CD8-positive, alpha-beta T cell (primary cell): ENCODE measurements at regions of chr17 and their contacts with region 1.

Region 1: GRCh38 chr17:8785547-8786413 is 13.4 kb downstream of the MFSD6L start:
- DNase-seq: peak; percentile 27 to 73 (median 60)
- ATAC-seq: peak; percentile 56
- H3K4me3 ChIP-seq: no peak overlapping the region
- H3K4me3 Mint-ChIP-seq: no peak overlapping the region
- H3K27ac ChIP-seq: no peak overlapping the region
- H3K27ac Mint-ChIP-seq: no peak overlapping the region
- H3K4me1 ChIP-seq: no peaks in the 10 kb centered on the region
- H3K4me1 Mint-ChIP-seq: no peaks in the 10 kb centered on the region
- H3K27me3 ChIP-seq: peaks cover 0 to 2% of the 10 kb centered on the region in 2 experiments
- H3K27me3 Mint-ChIP-seq: no peaks in the 10 kb centered on the region
- CTCF ChIP-seq: peak; percentile 83

Region 2: DNA sequence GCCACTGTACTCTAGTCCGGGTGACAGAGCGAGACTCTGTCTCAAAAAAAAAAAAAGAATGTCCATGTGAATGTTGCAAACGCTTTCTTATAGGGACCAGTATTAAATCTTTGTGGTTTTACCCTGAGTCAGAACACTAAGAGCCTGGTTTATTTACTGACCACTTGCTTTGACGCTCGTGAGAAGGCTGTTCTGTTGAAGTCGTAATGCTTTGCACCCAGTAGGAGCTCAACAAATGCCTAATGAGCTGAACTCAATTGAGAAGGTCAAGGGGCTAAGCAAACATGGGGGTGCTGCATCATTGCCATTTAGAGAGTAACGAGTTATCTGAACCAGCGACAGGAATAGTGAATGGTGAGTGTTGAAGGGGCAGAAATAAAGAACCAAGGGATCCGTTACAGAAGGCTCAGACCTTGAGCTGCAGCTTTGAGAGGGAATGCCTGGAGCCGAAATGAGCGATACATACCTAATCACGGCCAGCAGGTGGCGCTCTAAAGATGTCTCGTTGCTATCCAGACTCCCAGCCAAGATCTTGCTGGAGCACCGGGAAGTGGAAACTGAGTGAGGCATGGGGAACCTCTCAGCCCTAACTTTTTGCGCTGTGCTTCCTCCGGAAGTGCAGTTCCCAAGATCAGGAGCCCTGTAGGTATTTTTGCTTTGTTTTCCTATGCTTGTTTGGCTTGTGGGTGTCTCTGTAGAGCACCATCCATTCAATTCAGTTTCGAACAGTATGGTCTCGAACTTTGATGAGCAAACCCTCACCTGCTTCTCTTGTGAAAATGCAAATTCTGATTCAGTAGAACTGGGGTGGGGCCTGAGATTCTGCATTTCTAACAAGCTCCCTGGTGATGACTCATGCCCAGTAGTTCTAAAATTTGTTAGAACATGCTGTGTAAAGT is 375.6 kb before region 1 on chr17:
- CTCF ChIA-PET with region 1: interaction called, 17 read pairs
- POLR2A ChIA-PET with region 1: no interaction called
- intact Hi-C with region 1: loop called in 1 of 2 experiments (anchors 1 kb)
- DNase-seq: peak; percentile 47 to 88 (median 82)
- ATAC-seq: peak; percentile 92
- H3K4me3 ChIP-seq: no peak overlapping the region
- H3K4me3 Mint-ChIP-seq: no peak overlapping the region
- H3K27ac ChIP-seq: no peak overlapping the region
- H3K27ac Mint-ChIP-seq: no peak overlapping the region
- H3K4me1 ChIP-seq: peaks cover 3% of the 10 kb centered on the region
- H3K4me1 Mint-ChIP-seq: peaks cover 12% of the 10 kb centered on the region
- H3K27me3 ChIP-seq: peaks cover 0 to 3% of the 10 kb centered on the region in 2 experiments
- H3K27me3 Mint-ChIP-seq: peaks cover 9% of the 10 kb centered on the region
- CTCF ChIP-seq: peak; percentile 86

Region 3: DNA sequence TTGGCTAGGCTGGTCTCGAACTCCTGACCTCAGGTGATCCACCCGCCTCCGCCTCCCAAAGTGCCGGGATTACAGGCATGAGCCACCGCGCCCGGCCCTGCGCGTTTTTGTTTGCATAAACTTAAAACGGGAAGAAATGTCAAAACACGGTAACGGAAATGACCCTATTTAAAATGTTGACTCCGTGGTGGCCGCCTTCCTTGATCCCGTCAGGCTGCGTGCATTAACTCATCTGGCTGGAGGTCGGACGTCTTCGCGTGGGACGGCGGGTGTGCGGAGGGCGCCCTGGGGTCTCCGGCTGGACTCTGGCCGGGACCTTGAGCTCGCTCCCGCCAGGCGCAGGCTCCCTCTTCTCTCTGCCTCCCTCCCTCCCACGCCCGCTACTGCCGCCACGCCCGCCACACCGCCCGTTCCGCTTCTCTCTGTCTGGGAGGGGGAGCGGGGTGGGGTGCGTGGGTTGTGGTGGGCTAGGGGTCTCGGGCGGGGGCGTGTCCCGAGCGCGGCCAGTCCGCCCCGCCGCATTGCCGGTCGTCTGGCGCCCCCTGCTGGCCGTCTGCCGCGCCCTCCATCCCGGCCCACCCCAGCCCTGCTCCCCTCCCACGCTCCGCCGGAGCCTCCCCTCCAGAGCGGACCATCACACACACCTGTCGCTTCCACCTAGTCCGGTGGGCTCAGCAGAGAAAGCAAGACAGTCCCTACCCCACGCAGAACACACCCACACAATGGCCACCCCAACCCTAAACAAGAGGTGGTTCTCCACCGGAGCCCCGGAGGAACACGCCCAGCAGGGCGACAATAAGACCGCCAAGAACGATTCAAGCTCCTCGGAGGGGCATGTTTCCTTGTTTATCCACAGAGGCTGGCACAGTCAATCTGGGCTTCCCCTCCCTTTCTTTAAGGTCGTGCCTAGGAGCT is 39.9 kb before region 1 on chr17:
- CTCF ChIA-PET with region 1: interaction called, 12 read pairs
- POLR2A ChIA-PET with region 1: no interaction called
- intact Hi-C with region 1: no loop called
- DNase-seq: peak; percentile 56 to 91 (median 82)
- ATAC-seq: peak; percentile 72
- H3K4me3 ChIP-seq: peak overlapping the region; percentile 74 to 77
- H3K4me3 Mint-ChIP-seq: peak overlapping the region; percentile 94
- H3K27ac ChIP-seq: peak overlapping the region; percentile 69 to 82
- H3K27ac Mint-ChIP-seq: peak overlapping the region; percentile 94
- H3K4me1 ChIP-seq: peaks cover 15% of the 10 kb centered on the region
- H3K4me1 Mint-ChIP-seq: peaks cover 25% of the 10 kb centered on the region
- H3K27me3 ChIP-seq: no peaks in the 10 kb centered on the region
- H3K27me3 Mint-ChIP-seq: no peaks in the 10 kb centered on the region
- CTCF ChIP-seq: peak; percentile 94

Region 4: DNA sequence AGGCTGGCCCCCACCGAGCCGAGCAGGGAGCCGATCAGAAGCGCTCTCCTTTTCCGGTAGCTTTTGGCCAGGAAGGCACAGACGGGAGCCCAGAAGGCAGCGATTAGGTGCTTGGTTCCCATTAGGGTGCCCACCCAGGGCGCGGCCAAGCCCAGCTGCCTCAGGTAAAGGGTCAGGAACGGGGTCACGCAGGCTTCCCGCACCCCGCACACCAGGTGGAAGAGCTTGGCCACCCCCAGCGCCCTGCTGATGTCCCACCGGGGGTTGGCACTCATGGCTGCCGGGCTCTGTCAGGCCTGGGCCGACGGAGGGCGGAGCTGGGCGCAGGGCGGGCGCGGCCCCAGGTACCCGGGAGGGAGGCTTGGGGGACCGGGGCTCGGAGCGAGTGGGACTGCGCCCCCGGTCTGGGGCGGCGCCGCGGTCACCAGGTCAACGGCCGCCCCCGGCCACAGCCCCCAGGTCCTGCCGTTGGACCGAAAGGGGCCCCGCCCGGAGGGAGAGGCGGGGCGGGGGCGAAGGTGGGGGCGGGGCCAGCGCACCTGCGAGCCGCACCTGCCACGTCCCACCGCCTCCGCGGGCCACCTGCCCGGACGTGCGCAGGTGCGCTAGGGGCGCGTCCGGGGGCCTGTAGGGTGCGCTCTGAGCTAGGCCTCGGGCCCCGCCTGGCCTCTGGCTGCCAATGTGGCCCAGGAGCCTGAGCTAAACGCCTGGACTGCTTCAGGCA is 13.2 kb after region 1 on chr17 and contains the start of gene MFSD6L:
- CTCF ChIA-PET with region 1: interaction called, 14 read pairs
- POLR2A ChIA-PET with region 1: no interaction called
- intact Hi-C with region 1: no loop called
- DNase-seq: peak in 2 of 9 experiments; percentile 16 to 34
- ATAC-seq: peak; percentile 31
- H3K4me3 ChIP-seq: no peak within 1 kb of the TSS
- H3K4me3 Mint-ChIP-seq: no peak within 1 kb of the TSS
- H3K27ac ChIP-seq: no peak within 1 kb of the TSS
- H3K27ac Mint-ChIP-seq: no peak within 1 kb of the TSS
- H3K4me1 ChIP-seq: no peaks in the 10 kb centered on the region
- H3K4me1 Mint-ChIP-seq: no peaks in the 10 kb centered on the region
- H3K27me3 ChIP-seq: no peaks in the 10 kb centered on the region
- H3K27me3 Mint-ChIP-seq: no peaks in the 10 kb centered on the region
- CTCF ChIP-seq: no peak
- total RNA-seq, gene MFSD6L: not detected

Region 5: DNA sequence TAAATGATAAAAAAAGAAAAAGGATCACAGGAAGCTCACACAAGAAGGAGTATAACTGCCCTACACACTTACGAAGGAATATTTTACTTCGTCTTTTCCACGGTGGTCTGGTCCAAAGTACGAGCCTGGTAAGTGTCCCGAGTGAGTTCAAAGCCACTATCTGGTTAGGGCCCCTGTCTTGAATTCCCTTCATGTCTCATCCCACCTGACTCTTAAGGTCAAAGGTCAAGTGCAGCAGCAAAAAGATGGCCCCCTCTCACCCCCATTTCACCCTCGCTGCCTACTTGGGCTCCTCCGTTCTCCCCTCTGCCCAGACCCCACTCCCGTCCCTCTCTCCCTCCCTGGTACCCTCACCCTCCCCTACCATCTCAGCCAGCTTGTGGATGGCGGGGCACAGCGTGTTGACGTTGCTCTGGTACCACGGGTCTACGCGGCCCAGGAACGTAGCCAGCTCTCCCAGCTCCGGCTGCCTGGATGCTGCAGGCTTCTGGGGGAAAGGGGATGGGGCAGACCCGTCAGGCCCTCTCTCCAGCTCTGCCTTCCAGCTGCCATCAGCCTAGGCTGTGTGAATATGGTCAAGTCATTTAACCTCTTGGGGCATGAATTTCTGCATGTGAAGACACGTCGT is 41.1 kb after region 1 on chr17:
- CTCF ChIA-PET with region 1: interaction called, 12 read pairs
- POLR2A ChIA-PET with region 1: no interaction called
- intact Hi-C with region 1: no loop called
- DNase-seq: peak in 1 of 9 experiments; percentile 31
- ATAC-seq: no peak
- H3K4me3 ChIP-seq: no peak overlapping the region
- H3K4me3 Mint-ChIP-seq: no peak overlapping the region
- H3K27ac ChIP-seq: no peak overlapping the region
- H3K27ac Mint-ChIP-seq: no peak overlapping the region
- H3K4me1 ChIP-seq: no peaks in the 10 kb centered on the region
- H3K4me1 Mint-ChIP-seq: no peaks in the 10 kb centered on the region
- H3K27me3 ChIP-seq: no peaks in the 10 kb centered on the region
- H3K27me3 Mint-ChIP-seq: no peaks in the 10 kb centered on the region
- CTCF ChIP-seq: no peak